ENCODE measurements at regions of chr5 and their contacts with region 1.

Region 1: DNA sequence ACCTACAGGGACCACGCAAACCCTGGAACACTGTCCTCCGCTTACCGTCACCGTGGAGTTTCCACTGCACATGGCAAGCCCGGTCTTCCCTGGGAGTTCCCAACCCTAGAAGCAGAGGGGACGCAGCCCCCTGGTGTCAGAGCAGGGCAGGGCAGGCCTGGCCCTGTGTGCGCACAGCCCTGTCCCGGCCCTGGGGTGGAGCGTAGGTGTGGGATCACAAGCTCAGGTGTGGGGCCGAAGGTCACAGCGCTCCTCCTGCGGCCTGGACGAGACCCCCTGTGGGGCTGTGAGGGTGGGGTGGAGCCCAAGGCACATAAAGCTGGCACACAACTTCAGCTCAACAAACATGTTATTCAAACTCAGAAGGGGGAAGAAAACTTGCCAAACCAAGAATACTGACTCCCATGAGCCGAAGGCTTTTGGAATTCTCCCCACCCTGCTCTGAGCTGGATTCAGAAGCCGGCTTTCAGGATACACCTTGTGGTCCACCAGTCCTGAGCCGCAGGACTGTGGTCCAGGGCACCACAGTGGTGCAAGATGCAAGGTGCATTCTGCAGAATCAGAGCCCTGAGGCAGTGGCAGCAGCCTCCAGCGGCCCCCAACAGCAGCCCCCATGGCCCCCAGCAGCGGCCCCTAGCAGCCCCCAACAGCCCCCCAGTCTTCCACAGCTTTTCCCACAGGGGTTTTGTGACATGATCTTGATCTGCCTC is 11.8 kb upstream of the EXOC3 start:
- DNase-seq: peak; percentile 81
- CTCF ChIP-seq: peak; percentile 79

Region 2: GRCh38 chr5:252546-252945 is 178.6 kb before region 1 on chr5:
- in situ Hi-C with region 1: no loop called
- DNase-seq: no peak
- CTCF ChIP-seq: no peak

Region 3: GRCh38 chr5:317086-317811 is 113.9 kb before region 1 on chr5:
- in situ Hi-C with region 1: loop called (anchors 10 kb)
- DNase-seq: peak; percentile 94
- CTCF ChIP-seq: peak; percentile 98

Region 4: GRCh38 chr5:685262-686171 is 254.4 kb after region 1 on chr5:
- in situ Hi-C with region 1: no loop called
- DNase-seq: no peak
- CTCF ChIP-seq: no peak